ENCODE measurements at regions of chr6 and their contacts with region 1.

Region 1: DNA sequence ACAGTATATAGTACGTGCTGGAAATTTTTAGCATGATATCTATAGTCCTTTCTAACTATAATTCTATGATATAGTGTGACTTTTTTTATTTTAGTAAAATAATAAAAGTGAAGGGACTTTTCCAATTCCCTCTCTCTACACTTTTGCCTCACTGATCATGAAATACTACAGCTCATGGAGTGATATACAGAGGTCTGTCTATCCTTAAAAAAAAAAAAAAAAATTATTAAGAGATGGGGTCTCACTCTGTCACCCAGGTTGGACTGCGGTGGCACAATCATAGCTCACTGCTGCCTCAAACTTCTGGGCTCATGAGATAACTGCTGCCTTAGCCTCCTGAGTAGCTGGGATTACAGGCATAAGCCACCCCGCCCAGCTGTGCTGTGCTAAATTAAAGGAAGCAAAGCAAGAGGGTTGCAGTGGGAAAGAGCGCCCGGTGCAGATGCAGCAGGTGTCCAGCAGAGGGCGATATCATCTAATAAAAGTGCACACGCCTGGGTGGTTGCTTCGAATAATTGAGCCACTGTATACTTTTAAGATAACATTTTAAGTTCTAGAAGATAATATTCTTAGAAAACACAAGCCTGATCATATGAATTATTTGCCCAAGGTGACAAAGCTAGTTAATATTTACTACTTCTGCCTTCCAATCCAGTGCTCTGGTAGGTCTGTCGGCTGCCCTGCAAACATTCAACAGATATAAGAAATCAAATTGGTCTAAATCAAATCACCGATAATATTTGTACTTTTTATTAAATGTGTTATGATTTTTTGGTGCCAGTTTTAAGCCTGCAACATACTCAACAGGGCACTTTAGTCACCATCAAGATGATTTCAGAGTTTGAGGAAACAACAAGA is 94.9 kb upstream of the NT5E start:
- DNase-seq: peak; percentile 67 to 79 (median 78)
- ATAC-seq: peak; percentile 98
- H3K4me3 ChIP-seq: no peak overlapping the region
- H3K27ac ChIP-seq: no peak overlapping the region
- H3K4me1 ChIP-seq: no peaks in the 10 kb centered on the region
- H3K27me3 ChIP-seq: no peaks in the 10 kb centered on the region
- CTCF ChIP-seq: peak; percentile 79 to 92 (median 89)
- EP300 ChIP-seq: no peak
- POLR2A ChIP-seq: no peak
- RAD21 ChIP-seq: peak; percentile 84 to 86

Region 2: GRCh38 chr6:84218091-84218490 is 1136.9 kb before region 1 on chr6:
- CTCF ChIA-PET with region 1: no interaction called
- POLR2A ChIA-PET with region 1: no interaction called
- in situ Hi-C with region 1: no loop called
- intact Hi-C with region 1: no loop called
- DNase-seq: no peak
- ATAC-seq: no peak; the same call in 2 of the 3 replicates
- H3K4me3 ChIP-seq: no peak overlapping the region
- H3K27ac ChIP-seq: no peak overlapping the region
- H3K4me1 ChIP-seq: no peaks in the 10 kb centered on the region; a peak in 1 of 5 replicates
- H3K27me3 ChIP-seq: no peaks in the 10 kb centered on the region
- CTCF ChIP-seq: no peak
- EP300 ChIP-seq: no peak
- POLR2A ChIP-seq: no peak
- RAD21 ChIP-seq: no peak

Region 3: GRCh38 chr6:85323435-85324040 is 31.5 kb before region 1 on chr6:
- CTCF ChIA-PET with region 1: no interaction called
- POLR2A ChIA-PET with region 1: no interaction called
- in situ Hi-C with region 1: no loop called
- intact Hi-C with region 1: no loop called
- DNase-seq: peak; percentile 37 to 82 (median 56)
- ATAC-seq: peak; percentile 92
- H3K4me3 ChIP-seq: no peak overlapping the region
- H3K27ac ChIP-seq: no peak overlapping the region
- H3K4me1 ChIP-seq: no peaks in the 10 kb centered on the region
- H3K27me3 ChIP-seq: no peaks in the 10 kb centered on the region
- CTCF ChIP-seq: peak; percentile 68 to 84 (median 83)
- EP300 ChIP-seq: no peak
- POLR2A ChIP-seq: no peak
- RAD21 ChIP-seq: peak; percentile 74 to 83

Region 4: DNA sequence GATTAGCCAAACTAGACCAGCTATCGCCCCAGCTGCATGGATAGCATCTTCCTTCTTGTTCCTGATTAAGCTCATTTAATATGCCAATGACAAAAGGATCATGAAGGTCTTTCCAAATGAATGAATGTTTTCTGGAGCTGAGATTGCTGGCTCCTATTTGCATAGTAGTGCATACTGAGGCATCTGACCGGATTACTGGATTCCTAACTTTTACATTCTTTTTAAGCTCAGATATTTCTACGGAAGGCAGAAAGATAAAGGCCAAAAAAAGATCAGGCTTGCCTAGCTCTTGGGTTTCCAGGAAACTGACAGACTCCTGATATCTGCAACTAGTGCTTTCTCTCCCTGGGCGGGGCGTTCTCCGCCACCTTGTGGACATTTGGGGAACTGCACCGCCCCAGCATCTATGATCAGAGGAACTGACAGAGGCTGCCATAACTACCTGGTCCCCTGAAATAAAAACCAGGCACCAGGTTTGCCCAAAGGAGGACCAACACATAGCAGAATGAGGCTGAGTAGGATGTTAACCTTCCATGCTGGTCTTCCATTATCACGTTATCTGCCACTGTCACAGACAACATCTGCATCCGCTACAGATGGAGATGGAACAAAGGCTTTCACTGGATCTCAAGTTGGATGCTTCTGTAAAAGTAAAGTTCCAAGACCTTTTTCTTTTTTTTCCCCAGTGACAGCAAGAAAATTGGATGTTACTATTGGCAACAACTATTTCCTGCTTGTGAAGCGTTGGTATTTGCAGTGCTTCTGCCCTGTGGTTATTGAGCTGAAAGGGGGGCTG is 128.1 kb after region 1 on chr6:
- CTCF ChIA-PET with region 1: interaction called, 4 read pairs
- POLR2A ChIA-PET with region 1: no interaction called
- in situ Hi-C with region 1: loop called (anchors 10 kb)
- intact Hi-C with region 1: loop called (anchors 1 kb)
- DNase-seq: peak; percentile 76 to 80 (median 78)
- ATAC-seq: peak; percentile 96
- H3K4me3 ChIP-seq: no peak overlapping the region
- H3K27ac ChIP-seq: no peak overlapping the region
- H3K4me1 ChIP-seq: peaks cover 0 to 5% of the 10 kb centered on the region in 2 experiments; a peak in 2 of 5 replicates
- H3K27me3 ChIP-seq: peaks cover 0 to 3% of the 10 kb centered on the region in 2 experiments; a peak in 2 of 5 replicates
- CTCF ChIP-seq: peak; percentile 84 to 98 (median 91)
- EP300 ChIP-seq: no peak
- POLR2A ChIP-seq: no peak
- RAD21 ChIP-seq: peak; percentile 75 to 80

Region 5: GRCh38 chr6:85537055-85537494 is 182.1 kb after region 1 on chr6:
- CTCF ChIA-PET with region 1: interaction called, 4 read pairs
- POLR2A ChIA-PET with region 1: no interaction called
- in situ Hi-C with region 1: no loop called
- intact Hi-C with region 1: loop called (anchors 2 kb)
- DNase-seq: no peak
- ATAC-seq: no peak
- H3K4me3 ChIP-seq: no peak overlapping the region
- H3K27ac ChIP-seq: no peak overlapping the region
- H3K4me1 ChIP-seq: no peaks in the 10 kb centered on the region
- H3K27me3 ChIP-seq: no peaks in the 10 kb centered on the region
- CTCF ChIP-seq: peak in 1 of 3 experiments; percentile 33; a peak in 2 of 6 replicates
- EP300 ChIP-seq: no peak
- POLR2A ChIP-seq: no peak
- RAD21 ChIP-seq: 0 out of 4 replicates have a peak, but pooled peaks of 1 of the 2 experiments have one; percentile 7

Region 6: DNA sequence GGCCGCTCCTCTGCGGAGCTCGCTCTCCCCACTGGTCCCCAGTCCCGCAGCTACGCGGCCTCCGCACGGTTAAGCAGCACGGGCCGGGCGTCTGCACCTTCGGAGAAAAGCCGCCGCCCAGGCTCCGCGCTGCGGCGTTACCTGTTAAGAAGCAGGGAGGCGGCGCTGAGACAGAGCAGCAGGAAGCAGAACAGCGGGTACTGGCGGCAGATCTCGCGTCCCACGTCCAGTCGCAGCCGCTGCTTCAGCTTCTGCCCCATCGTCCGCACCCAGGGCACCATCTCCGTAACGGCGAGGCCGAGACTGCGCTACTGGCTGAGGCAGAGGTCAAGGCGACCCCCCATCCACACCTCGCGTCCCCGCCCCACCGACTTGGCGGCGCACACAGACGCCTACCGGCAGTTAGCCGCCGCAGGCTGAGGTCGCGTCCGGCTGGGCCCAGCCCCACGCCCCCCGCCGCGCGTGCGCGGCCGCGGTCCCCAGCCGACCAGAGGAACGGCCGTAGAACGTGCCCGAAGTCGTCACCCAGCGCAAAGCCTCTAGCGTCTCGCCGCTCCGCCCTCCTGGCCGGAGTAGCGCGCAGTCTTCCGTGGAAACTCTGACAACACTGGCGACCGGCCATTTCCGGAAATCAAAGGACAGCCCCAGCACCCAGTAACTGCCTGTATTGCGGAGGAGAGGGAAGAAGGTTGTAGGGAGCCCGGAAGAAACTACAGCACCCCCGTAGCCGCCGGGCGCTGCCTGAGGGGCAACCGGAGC is 238.6 kb after region 1 on chr6 and contains the start of gene SNX14:
- CTCF ChIA-PET with region 1: no interaction called
- POLR2A ChIA-PET with region 1: no interaction called
- in situ Hi-C with region 1: no loop called
- intact Hi-C with region 1: loop called (anchors 5 kb)
- DNase-seq: peak; percentile 88 to 96 (median 90)
- ATAC-seq: peak; percentile 93
- H3K4me3 ChIP-seq: peak within 1 kb of the TSS; percentile 92
- H3K27ac ChIP-seq: peak within 1 kb of the TSS; percentile 97
- H3K4me1 ChIP-seq: peaks cover 13 to 16% of the 10 kb centered on the region in 2 experiments; a peak in 3 of 5 replicates
- H3K27me3 ChIP-seq: no peaks in the 10 kb centered on the region
- CTCF ChIP-seq: no peak; a peak in 1 of 6 replicates
- EP300 ChIP-seq: peak; percentile 30; the same call in 1 of the 2 replicates
- POLR2A ChIP-seq: peak; percentile 88
- RAD21 ChIP-seq: peak in 1 of 2 experiments; percentile 8; a peak in 1 of 4 replicates
- polyA plus RNA-seq, gene SNX14: 46.5 to 61.1 TPM

Region 7: GRCh38 chr6:85983032-85983659 is 628.2 kb after region 1 on chr6:
- CTCF ChIA-PET with region 1: no interaction called
- POLR2A ChIA-PET with region 1: no interaction called
- in situ Hi-C with region 1: no loop called
- intact Hi-C with region 1: no loop called
- DNase-seq: no peak
- ATAC-seq: no peak
- H3K4me3 ChIP-seq: no peak overlapping the region
- H3K27ac ChIP-seq: no peak overlapping the region
- H3K4me1 ChIP-seq: no peaks in the 10 kb centered on the region
- H3K27me3 ChIP-seq: no peaks in the 10 kb centered on the region
- CTCF ChIP-seq: no peak
- EP300 ChIP-seq: no peak
- POLR2A ChIP-seq: no peak
- RAD21 ChIP-seq: no peak

Region 8: GRCh38 chr6:86937219-86938079 is 1582.5 kb after region 1 on chr6 and contains the start of gene HTR1E:
- CTCF ChIA-PET with region 1: no interaction called
- POLR2A ChIA-PET with region 1: no interaction called
- in situ Hi-C with region 1: no loop called
- intact Hi-C with region 1: loop called (anchors 2 kb)
- DNase-seq: peak; percentile 51 to 70 (median 56)
- ATAC-seq: peak; percentile 99
- H3K4me3 ChIP-seq: no peak within 1 kb of the TSS
- H3K27ac ChIP-seq: no peak within 1 kb of the TSS
- H3K4me1 ChIP-seq: peaks cover 0 to 7% of the 10 kb centered on the region in 2 experiments; a peak in 1 of 5 replicates
- H3K27me3 ChIP-seq: no peaks in the 10 kb centered on the region; a peak in 1 of 5 replicates
- CTCF ChIP-seq: peak; percentile 69 to 81 (median 69)
- EP300 ChIP-seq: no peak
- POLR2A ChIP-seq: no peak
- RAD21 ChIP-seq: peak in 1 of 2 experiments; percentile 79; a peak in 3 of 4 replicates
- polyA plus RNA-seq, gene HTR1E: not detected